Right lobe of liver (tissue), 6 donors: ENCODE measurements at regions of chr3 and their contacts with region 1.

Region 1: DNA sequence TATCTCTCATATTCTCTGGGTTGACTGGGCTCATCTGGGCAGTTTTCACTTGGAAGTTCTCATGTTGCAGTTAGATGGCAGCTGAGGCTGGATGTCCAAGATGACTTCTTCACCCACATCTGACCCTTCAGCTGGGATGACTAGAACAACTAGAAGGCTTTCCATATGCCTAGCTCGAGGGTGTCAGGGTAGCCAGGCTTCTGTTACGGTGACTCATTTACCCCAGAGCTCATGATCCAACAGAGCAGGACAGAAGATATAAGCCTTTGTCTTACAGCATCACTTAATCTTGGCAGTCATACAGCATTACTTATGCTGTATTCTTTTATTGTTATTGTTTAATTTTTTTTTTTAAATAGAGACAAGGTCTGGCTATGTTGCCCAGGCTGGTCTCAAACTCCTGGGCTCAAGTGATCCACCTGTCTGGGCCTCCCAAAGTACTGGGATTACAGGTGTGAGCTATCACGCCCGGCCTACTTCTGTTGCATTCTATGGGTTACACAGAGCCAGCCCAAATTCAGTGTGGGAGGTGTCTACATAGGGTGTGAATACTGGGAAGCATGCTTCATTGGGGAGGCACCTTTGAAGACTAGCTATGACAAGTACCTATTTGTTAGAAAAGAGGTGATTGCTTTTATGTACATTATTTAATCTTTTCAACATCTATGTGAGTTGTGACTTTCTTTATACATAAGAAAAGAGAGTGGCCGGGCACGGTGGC is 10.7 kb downstream of the HMCES start:
- DNase-seq: no peak
- ATAC-seq: no peak
- H3K4me3 ChIP-seq: no peak overlapping the region
- H3K27ac ChIP-seq: no peak overlapping the region
- H3K4me1 ChIP-seq: no peaks in the 10 kb centered on the region
- H3K27me3 ChIP-seq: no peaks in the 10 kb centered on the region
- CTCF ChIP-seq: no peak
- POLR2A ChIP-seq: no peak

Region 2: GRCh38 chr3:129323651-129324294 is 34.4 kb after region 1 on chr3:
- intact Hi-C with region 1: loop called in 1 of 2 experiments (anchors 5 kb)
- DNase-seq: peak; percentile 66 to 79 (median 76)
- ATAC-seq: peak; percentile 85 to 91 (median 89)
- H3K4me3 ChIP-seq: no peak overlapping the region
- H3K27ac ChIP-seq: no peak overlapping the region
- H3K4me1 ChIP-seq: no peaks in the 10 kb centered on the region
- H3K27me3 ChIP-seq: no peaks in the 10 kb centered on the region
- CTCF ChIP-seq: peak; percentile 26 to 51 (median 37)
- POLR2A ChIP-seq: no peak